ENCODE measurements at regions of chr7 and their contacts with region 1.

Region 1: DNA sequence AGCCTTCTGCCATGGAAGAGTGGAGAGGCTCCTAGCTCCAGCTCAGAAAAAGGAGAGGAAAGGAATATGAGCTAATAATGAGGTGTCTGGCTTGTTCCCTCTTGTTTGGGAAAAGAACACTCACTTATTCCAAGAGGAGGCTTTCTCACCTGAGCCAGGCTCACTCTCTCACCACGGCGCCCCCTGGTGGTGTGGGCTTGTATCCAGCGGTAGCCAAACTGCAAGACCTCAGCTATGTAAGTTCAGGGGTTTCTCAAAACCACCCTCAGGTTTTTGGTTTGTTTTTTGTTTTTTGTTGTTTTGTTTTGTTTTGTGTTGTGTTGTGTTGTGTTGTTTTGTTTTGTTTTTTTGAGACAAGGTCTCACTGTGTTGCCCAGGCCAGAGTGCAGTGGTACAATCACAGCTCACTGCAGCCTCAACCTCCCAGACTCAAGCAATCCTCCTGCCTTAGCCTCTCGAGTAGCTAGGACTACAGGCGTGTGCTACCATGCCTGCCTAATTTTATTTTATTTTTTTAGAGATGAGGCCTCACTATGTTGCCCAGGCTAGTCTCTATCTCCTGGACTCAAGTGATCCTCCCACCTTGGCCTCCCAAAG is 124.0 kb downstream of the TMEM130 start:
- DNase-seq: peak; percentile 77
- H3K4me3 Mint-ChIP-seq: no peak overlapping the region
- H3K27ac Mint-ChIP-seq: no peak overlapping the region
- H3K4me1 Mint-ChIP-seq: no peaks in the 10 kb centered on the region
- H3K27me3 Mint-ChIP-seq: peaks cover 2% of the 10 kb centered on the region

Region 2: DNA sequence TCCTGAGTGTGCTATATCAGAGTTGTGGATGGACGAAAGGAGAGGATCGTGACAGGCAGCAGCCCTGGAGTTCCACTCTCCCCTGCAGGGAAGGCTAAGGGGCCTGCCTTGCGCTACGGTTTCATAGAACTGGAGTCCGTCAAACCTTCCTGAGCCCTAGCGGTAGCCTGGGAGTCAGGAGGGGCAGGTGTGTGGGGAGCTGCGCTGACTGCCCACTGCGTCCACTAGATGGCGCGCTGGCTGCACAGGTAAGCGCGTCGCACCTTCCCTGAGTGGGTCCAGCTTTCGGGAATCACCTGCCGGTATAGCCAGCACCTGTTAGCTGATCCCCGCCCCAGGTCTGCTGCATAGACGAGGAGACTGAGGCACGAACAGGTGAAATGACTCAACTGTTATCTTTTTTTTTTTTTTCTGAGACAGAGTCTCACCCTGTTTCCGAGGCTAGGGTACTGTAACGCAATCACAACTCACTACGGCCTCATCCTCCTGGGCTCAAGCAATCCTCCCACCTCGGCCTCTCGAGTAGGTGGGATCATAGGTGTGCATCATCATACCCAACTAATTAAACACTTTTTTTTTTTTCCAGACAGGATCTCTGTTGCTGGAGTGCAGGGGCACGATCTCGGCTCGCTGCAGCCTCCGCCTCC is 324.7 kb before region 1 on chr7:
- CTCF ChIA-PET with region 1: interaction called, 10 read pairs
- POLR2A ChIA-PET with region 1: no interaction called
- intact Hi-C with region 1: no loop called
- DNase-seq: peak; percentile 71
- H3K4me3 Mint-ChIP-seq: no peak overlapping the region
- H3K27ac Mint-ChIP-seq: no peak overlapping the region
- H3K4me1 Mint-ChIP-seq: peaks cover 7% of the 10 kb centered on the region
- H3K27me3 Mint-ChIP-seq: peaks cover 5% of the 10 kb centered on the region

Region 3: DNA sequence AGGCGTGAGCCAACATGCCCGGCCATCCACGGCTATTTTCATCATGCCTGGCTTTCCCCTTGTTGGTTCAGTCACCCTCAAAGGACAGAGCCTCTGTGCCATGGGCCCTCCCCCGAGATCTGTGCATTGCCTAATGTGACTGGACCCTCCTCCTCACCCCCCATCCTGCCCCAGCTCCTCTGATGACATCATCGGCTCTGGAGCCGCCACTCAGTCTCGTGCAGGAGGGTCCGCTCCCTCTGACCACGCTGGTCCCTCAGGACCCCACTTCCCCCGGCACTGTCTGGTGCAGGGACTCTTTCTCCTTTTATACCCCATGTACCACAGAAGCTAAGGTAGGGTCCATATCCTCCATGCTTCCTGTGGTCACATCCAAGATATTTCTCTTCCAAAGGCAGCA is 311.7 kb before region 1 on chr7:
- CTCF ChIA-PET with region 1: interaction called, 20 read pairs
- POLR2A ChIA-PET with region 1: no interaction called
- intact Hi-C with region 1: no loop called
- DNase-seq: no peak
- H3K4me3 Mint-ChIP-seq: no peak overlapping the region
- H3K27ac Mint-ChIP-seq: no peak overlapping the region
- H3K4me1 Mint-ChIP-seq: peaks cover 3% of the 10 kb centered on the region
- H3K27me3 Mint-ChIP-seq: no peaks in the 10 kb centered on the region

Region 4: GRCh38 chr7:98470485-98471240 is 275.2 kb before region 1 on chr7:
- CTCF ChIA-PET with region 1: no interaction called
- POLR2A ChIA-PET with region 1: no interaction called
- intact Hi-C with region 1: no loop called
- DNase-seq: peak; percentile 27
- H3K4me3 Mint-ChIP-seq: no peak overlapping the region
- H3K27ac Mint-ChIP-seq: no peak overlapping the region
- H3K4me1 Mint-ChIP-seq: peaks cover 5% of the 10 kb centered on the region
- H3K27me3 Mint-ChIP-seq: peaks cover 32% of the 10 kb centered on the region

Region 5: GRCh38 chr7:98703916-98704315 is 41.9 kb before region 1 on chr7:
- CTCF ChIA-PET with region 1: no interaction called
- POLR2A ChIA-PET with region 1: no interaction called
- intact Hi-C with region 1: no loop called
- DNase-seq: no peak
- H3K4me3 Mint-ChIP-seq: no peak overlapping the region
- H3K27ac Mint-ChIP-seq: no peak overlapping the region
- H3K4me1 Mint-ChIP-seq: no peaks in the 10 kb centered on the region
- H3K27me3 Mint-ChIP-seq: no peaks in the 10 kb centered on the region

Region 6: GRCh38 chr7:98733036-98733435 is 12.8 kb before region 1 on chr7:
- CTCF ChIA-PET with region 1: interaction called, 11 read pairs
- POLR2A ChIA-PET with region 1: no interaction called
- intact Hi-C with region 1: no loop called
- DNase-seq: peak; percentile 66
- H3K4me3 Mint-ChIP-seq: no peak overlapping the region
- H3K27ac Mint-ChIP-seq: no peak overlapping the region
- H3K4me1 Mint-ChIP-seq: no peaks in the 10 kb centered on the region
- H3K27me3 Mint-ChIP-seq: peaks cover 10% of the 10 kb centered on the region

Region 7: GRCh38 chr7:98841179-98841997 is 95.6 kb after region 1 on chr7:
- CTCF ChIA-PET with region 1: interaction called, 14 read pairs
- POLR2A ChIA-PET with region 1: no interaction called
- intact Hi-C with region 1: loop called (anchors 10 kb)
- DNase-seq: peak; percentile 75
- H3K4me3 Mint-ChIP-seq: no peak overlapping the region
- H3K27ac Mint-ChIP-seq: no peak overlapping the region
- H3K4me1 Mint-ChIP-seq: peaks cover 2% of the 10 kb centered on the region
- H3K27me3 Mint-ChIP-seq: peaks cover 4% of the 10 kb centered on the region